Testis (tissue), 5 donors: ENCODE measurements at regions of chr18 and their contacts with region 1.

Region 1: DNA sequence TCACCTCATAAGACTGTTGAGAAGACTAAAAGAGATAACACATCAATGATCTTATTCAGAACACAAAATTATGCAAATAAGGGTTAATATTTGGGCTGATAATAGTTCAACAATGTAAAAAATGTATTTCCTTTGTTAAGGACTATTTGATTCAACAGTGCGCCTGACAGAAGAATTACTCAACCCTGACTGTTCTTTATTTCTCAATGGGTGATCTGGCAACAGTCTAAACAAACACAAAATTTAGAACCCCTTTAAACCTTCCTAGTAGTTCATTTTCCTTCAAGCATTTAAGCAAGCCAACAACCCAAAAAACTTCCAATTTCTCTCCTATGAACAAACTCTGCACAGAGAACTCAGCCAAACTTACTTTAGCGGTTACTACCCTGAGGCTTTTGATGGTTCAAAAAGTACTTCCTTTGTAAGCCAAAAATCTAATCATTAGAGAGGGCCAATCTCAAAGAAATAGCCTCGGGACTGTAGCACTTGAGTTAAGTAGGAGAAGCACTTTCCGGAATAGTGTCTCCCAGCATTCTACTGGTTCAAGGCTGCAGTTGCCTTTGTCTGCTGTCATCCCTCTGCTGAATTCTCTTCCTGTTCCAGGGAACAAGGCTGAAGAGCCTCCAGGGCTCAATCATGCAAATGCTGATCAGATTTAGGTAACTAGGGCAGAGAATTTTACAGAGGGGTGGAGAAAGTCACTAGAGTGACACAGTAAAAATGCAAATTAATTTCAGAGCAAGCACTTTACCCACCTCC is 40.9 kb upstream of the MAPK4 start:
- DNase-seq: no peak
- H3K4me3 ChIP-seq: no peak overlapping the region
- H3K27ac ChIP-seq: no peak overlapping the region
- H3K4me1 ChIP-seq: peaks cover 6% of the 10 kb centered on the region
- H3K27me3 ChIP-seq: no peaks in the 10 kb centered on the region
- CTCF ChIP-seq: no peak
- POLR2A ChIP-seq: no peak

Region 2: GRCh38 chr18:50429207-50429948 is 89.6 kb before region 1 on chr18:
- intact Hi-C with region 1: no loop called
- DNase-seq: no peak
- H3K4me3 ChIP-seq: no peak overlapping the region
- H3K27ac ChIP-seq: no peak overlapping the region
- H3K4me1 ChIP-seq: no peaks in the 10 kb centered on the region
- H3K27me3 ChIP-seq: no peaks in the 10 kb centered on the region
- CTCF ChIP-seq: peak in 2 of 3 experiments; percentile 38 to 63
- POLR2A ChIP-seq: no peak

Region 3: DNA sequence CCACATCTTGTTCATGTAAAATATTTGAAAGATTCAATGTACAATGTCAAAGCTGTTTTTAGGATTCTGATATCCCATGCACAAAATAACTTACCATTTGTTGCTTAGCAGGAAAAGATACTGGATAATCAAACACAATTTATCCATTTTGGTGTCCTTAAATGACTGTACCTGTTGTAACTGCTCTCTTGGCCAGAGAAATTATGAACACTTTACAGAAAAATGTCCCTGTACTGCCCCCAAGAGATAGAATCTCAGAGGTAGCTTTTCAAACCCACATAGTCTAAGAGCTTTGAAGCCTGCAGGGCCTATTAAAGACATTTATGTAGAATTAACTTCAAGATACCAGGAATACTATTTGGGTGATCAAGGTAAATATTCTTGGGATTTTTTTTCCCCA is 347.8 kb after region 1 on chr18:
- intact Hi-C with region 1: loop called (anchors 10 kb)
- DNase-seq: no peak
- H3K4me3 ChIP-seq: no peak overlapping the region
- H3K27ac ChIP-seq: no peak overlapping the region
- H3K4me1 ChIP-seq: no peaks in the 10 kb centered on the region
- H3K27me3 ChIP-seq: no peaks in the 10 kb centered on the region
- CTCF ChIP-seq: peak in 2 of 3 experiments; percentile 18 to 19
- POLR2A ChIP-seq: no peak